ENCODE measurements at regions of chr9 and their contacts with region 1.

Region 1: GRCh38 chr9:104009826-104010225 is 84.3 kb upstream of the SMC2 start:
- DNase-seq: no peak
- H3K4me3 ChIP-seq: no peak overlapping the region
- H3K27ac ChIP-seq: no peak overlapping the region
- H3K4me1 ChIP-seq: no peaks in the 10 kb centered on the region
- H3K27me3 ChIP-seq: no peaks in the 10 kb centered on the region
- CTCF ChIP-seq: no peak

Region 2: GRCh38 chr9:103991698-103992097 is 18.1 kb before region 1 on chr9:
- intact Hi-C with region 1: loop called (anchors 2 kb)
- DNase-seq: no peak
- H3K4me3 ChIP-seq: no peak overlapping the region
- H3K27ac ChIP-seq: no peak overlapping the region
- H3K4me1 ChIP-seq: no peaks in the 10 kb centered on the region
- H3K27me3 ChIP-seq: no peaks in the 10 kb centered on the region
- CTCF ChIP-seq: no peak